ENCODE measurements at regions of chr4 and their contacts with region 1.

Region 1: GRCh38 chr4:112765317-112765975 is 128.5 kb downstream of the LARP7 start:
- DNase-seq: no peak
- ATAC-seq: peak; percentile 54
- H3K4me3 Mint-ChIP-seq: no peak overlapping the region
- H3K27ac Mint-ChIP-seq: no peak overlapping the region
- H3K4me1 Mint-ChIP-seq: peaks cover 3% of the 10 kb centered on the region
- H3K27me3 Mint-ChIP-seq: peaks cover 4% of the 10 kb centered on the region
- CTCF ChIP-seq: no peak

Region 2: DNA sequence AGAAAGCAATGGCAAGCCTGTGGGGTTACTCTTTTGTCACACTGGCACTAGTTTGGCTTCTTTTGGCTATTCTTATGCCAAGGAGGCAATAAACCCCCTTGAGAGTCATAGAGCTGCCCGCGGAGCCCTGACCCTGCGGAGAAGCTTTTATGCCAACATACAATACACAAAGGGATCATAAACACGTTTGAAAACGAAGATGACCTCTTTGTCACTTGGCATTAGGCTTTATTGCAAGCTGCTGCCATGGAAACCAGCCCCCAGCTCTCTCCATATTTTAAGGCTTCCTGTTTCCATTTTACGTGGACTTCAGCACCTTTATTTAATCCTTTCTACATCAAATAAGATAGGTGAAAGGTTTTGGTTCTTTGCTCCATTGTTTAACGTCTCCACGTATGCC is 257.1 kb before region 1 on chr4:
- CTCF ChIA-PET with region 1: no interaction called
- POLR2A ChIA-PET with region 1: no interaction called
- intact Hi-C with region 1: no loop called
- DNase-seq: no peak
- ATAC-seq: no peak
- H3K4me3 Mint-ChIP-seq: peak overlapping the region; percentile 0
- H3K27ac Mint-ChIP-seq: no peak overlapping the region
- H3K4me1 Mint-ChIP-seq: peaks cover 27% of the 10 kb centered on the region
- H3K27me3 Mint-ChIP-seq: peaks cover 71% of the 10 kb centered on the region
- CTCF ChIP-seq: no peak

Region 3: DNA sequence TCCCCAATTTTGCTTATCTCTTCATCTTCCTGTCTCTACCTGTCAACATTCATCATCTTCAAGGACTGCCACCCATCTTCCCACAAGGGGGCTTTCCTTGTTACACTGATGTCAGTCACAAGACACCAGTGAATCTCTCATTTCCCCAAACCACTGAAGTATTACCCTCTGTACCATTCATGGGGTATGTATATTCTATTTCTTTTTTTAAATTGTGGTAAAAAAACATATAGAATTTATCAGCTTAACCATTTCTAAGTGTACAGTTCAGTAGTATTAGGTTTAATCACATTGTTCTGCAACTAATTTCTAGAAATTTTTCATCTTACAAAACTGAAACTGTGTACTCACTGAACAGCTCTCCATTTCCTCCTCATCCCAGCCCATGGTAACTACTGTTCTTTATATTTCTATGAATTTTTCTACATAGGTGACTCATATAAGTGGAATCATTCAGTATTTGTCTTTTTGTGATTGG is 29.9 kb before region 1 on chr4:
- CTCF ChIA-PET with region 1: interaction called, 6 read pairs
- POLR2A ChIA-PET with region 1: interaction called, 10 read pairs
- intact Hi-C with region 1: loop called (anchors 2 kb)
- DNase-seq: no peak
- ATAC-seq: peak; percentile 67
- H3K4me3 Mint-ChIP-seq: no peak overlapping the region
- H3K27ac Mint-ChIP-seq: peak overlapping the region; percentile 21
- H3K4me1 Mint-ChIP-seq: peaks cover 15% of the 10 kb centered on the region
- H3K27me3 Mint-ChIP-seq: no peaks in the 10 kb centered on the region
- CTCF ChIP-seq: no peak

Region 4: DNA sequence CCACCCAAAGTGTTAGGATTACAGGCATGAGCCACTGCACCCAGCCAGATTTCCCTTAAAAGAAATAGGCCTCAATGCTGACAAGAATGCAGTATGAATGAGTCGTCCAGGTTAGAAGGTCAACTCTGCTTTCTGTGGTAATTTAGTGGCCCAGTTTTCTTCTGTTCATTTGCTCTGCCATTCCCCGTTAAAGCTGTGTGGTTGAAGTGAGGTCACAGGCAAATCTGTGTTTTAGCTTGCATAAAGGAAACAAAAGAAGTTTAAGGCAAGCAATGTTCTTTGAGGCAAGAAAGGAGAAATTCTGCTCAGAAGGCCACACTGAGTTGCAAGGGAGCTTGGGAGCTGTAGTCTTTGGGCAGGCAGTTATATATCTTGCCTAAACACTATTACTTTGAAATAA is 48.3 kb after region 1 on chr4:
- CTCF ChIA-PET with region 1: no interaction called
- POLR2A ChIA-PET with region 1: no interaction called
- intact Hi-C with region 1: no loop called
- DNase-seq: no peak
- ATAC-seq: no peak
- H3K4me3 Mint-ChIP-seq: no peak overlapping the region
- H3K27ac Mint-ChIP-seq: no peak overlapping the region
- H3K4me1 Mint-ChIP-seq: peaks cover 13% of the 10 kb centered on the region
- H3K27me3 Mint-ChIP-seq: peaks cover 2% of the 10 kb centered on the region
- CTCF ChIP-seq: no peak